Astrocyte of the cerebellum (primary cell): ENCODE measurements at regions of chr17 and their contacts with region 1.

Region 1: DNA sequence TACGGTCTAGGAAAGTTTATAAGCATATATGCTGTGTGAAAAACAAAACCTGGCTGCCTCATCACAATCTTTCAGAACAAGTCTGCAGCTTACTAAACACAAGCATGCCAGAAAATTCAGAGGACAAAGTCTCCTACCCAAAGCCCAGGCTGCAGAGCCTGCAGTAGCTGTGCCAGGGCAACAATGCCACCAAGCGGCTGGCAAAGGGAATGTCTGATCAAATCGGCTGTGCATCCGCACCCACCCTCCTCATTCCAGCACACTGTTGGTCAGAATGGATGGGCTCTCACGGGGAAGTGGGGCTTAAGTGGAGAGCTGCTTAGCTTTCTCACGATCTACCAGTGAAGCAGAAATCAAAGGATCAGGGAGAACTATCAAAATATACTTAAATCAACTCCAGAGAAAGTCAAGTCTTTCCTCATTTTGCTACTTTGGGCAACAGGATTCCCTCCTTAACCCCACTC is 73.5 kb downstream of the CYTH1 start:
- DNase-seq: peak; percentile 65
- H3K4me3 ChIP-seq: no peak overlapping the region
- CTCF ChIP-seq: peak; percentile 92

Region 2: GRCh38 chr17:78484300-78485246 is 224.0 kb before region 1 on chr17:
- in situ Hi-C with region 1: loop called (anchors 5 kb)
- DNase-seq: no peak
- H3K4me3 ChIP-seq: peak overlapping the region; percentile 20
- CTCF ChIP-seq: no peak